ENCODE measurements at regions of chr11 and their contacts with region 1.

Region 1: DNA sequence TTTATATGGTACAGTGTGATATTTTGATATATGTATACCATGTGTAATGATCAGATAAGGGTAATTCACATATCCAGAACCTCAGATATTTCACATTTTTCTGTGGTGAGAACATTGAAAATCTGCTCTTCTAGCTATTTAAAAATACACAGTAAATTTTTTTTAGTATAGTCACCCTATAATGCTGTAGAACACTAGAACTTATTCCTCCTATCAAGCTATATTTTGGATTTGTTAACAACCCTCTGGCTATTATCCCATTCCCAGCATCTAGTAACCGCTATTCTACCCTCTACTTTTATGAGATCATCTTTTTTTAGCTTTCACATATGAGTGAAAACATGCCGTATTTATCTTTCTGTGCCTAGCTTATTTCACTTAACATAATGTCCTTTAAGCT is 65.5 kb upstream of the SYT9 start:
- DNase-seq: no peak

Region 2: GRCh38 chr11:5940748-5941147 is 1245.4 kb before region 1 on chr11:
- intact Hi-C with region 1: loop called in 1 of 2 experiments (anchors 5 kb)
- DNase-seq: no peak

Region 3: DNA sequence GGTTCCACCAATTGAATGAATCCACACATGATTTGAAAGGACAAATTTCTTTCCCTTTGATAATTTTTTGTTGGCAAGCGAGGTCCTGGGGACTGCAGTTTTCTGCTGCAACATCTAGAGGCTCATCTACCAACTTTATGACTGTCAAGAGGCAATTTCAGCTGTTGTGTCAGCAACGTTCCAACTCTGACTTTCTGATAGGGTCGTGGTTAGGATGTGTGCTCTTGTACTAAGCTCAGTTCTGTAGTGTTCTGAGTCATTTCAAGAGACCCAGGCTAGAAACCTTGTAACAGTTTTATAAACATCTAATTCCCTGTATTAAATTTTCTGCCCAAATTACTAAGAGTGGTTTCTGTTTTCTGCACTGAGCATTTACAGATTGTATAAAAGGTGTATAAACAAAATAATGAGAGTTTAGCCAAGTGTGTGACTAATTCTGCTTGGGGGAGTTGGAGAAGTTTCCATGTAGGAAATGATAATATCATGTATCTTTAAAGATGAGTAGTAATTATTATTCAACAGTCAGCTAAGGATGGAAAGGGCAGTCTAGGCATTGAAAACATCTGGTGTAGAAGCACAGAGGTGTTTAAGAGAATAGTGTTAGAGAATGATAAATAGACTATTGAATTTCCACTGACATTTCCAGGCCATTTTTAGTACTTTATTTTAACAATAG is 25.2 kb before region 1 on chr11:
- intact Hi-C with region 1: loop called in 1 of 2 experiments (anchors 1 kb)
- DNase-seq: no peak